ENCODE measurements at regions of chr16 and their contacts with region 1.

Region 1: DNA sequence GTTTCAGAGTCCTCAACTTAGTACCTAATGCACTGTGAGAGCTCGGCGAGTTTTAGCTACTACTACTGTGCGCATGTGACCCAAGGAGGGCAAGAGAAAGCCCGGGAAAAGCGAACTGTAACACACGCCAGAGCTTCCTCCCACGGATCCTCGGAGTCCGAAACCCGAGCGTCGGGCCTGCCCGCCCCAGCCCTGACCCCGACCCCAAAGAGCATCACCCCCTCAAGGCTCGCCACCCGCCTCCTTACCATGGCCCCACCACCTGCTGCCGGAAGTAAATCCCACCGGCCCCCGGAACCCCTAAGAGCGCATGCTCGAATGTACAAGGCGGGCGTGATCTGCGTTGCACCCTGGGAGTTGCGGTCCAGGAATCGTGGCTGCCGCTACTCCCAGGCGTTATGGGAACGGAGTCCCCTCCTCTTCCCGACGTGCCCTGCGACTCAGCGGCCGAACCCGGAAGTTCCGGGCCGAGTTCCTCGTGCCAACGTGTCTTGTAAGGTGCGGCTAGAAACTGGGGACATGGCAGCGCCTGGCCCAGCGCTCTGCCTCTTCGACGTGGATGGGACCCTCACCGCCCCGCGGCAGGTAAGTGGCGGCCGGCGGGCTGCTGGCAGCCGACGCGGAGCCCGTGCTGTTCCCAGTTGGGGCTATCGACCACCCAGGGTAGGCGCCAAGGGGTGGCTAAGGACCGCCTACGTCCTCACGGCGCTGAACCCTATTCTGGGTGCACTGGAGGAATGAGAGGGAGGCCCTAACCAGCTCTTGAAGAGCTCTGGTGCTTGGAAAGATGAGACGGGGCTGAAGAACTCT is at the starts of genes PMM2 and TMEM186:
- DNase-seq: peak; percentile 89
- H3K4me3 ChIP-seq: peak within 1 kb of the TSS; percentile 64 to 99 (median 80)
- H3K27ac ChIP-seq: peak within 1 kb of the TSS; percentile 76 to 93 (median 90)
- H3K4me1 ChIP-seq: peaks cover 19 to 46% (median 24%) of the 10 kb centered on the region in 3 donors
- H3K27me3 ChIP-seq: no peaks in the 10 kb centered on the region
- CTCF ChIP-seq: peak in 1 of 6 experiments; percentile 9
- POLR2A ChIP-seq: peak in 1 of 4 donors; percentile 50
- total RNA-seq, gene PMM2: 36.3 to 54.3 (median 41.4) TPM
- total RNA-seq, gene TMEM186: 3.6 to 9.7 (median 8.6) TPM

Region 2: DNA sequence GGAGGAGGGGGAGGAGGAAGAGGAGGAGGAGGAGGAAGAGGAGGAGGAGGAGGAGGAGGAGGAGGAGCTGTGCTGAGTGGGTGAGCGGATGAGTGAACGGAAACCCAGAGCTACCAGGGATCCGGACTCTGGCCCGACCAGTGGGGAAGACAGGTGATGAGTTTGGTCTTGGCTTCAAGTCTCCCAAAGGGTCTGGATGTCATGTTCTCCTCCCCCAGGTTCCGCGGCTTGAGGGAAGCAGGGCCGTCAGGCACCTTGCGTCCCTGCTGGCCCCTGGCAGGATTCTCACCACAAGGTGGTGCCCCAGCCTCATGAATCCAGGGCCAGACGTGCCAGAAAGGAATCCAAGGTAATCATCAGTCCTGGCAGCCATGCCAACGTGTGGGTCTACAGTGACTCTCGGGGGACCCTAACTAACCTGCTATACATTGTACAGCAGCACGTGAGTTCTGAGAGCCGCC is 136.7 kb before region 1 on chr16:
- intact Hi-C with region 1: loop called (anchors 2 kb)
- DNase-seq: no peak
- H3K4me3 ChIP-seq: no peak overlapping the region
- H3K27ac ChIP-seq: no peak overlapping the region
- H3K4me1 ChIP-seq: no peaks in the 10 kb centered on the region
- H3K27me3 ChIP-seq: no peaks in the 10 kb centered on the region
- CTCF ChIP-seq: peak; percentile 27 to 92 (median 70)
- POLR2A ChIP-seq: no peak

Region 3: DNA sequence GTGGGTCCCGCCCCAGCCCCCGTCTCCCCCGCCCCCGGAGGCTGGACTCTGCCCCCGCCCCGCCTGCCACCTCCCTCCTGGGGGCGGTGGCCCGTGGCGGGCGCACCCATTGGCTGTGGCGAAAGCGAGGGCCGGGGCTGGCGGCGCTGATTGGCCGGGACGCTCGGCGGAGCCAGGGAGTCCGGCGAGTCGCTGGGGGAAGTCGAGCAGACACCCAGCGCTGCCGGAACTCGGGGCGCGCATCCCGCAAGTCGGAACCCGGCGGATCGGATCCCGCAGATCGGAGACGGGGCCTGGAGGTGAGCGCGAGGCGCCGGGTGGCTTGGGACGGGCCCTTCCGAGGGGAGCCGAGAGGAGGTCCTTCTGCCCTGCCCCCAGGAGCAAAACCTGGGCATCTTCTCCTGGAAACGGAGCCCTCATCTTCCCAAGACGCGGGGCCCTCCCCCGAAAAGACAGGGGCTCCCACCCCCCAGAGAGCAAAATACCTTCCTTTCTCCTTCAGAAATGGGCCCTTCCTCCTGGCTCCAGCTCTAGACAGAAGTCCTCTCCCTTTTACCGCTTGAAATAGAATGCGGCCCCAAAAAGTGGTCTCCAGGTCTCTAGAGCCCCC is 123.1 kb before region 1 on chr16 and contains the start of gene ABAT:
- intact Hi-C with region 1: loop called (anchors 5 kb)
- DNase-seq: peak; percentile 45
- H3K4me3 ChIP-seq: peak within 1 kb of the TSS; percentile 57 to 69 (median 60)
- H3K27ac ChIP-seq: peak within 1 kb of the TSS; percentile 56 to 71 (median 63)
- H3K4me1 ChIP-seq: peaks cover 16 to 57% (median 21%) of the 10 kb centered on the region in 3 donors
- H3K27me3 ChIP-seq: no peaks in the 10 kb centered on the region
- CTCF ChIP-seq: no peak
- POLR2A ChIP-seq: peak in 3 of 4 donors; percentile 11 to 68 (median 41)
- total RNA-seq, gene ABAT: 2.9 to 14.5 (median 9.1) TPM

Region 4: DNA sequence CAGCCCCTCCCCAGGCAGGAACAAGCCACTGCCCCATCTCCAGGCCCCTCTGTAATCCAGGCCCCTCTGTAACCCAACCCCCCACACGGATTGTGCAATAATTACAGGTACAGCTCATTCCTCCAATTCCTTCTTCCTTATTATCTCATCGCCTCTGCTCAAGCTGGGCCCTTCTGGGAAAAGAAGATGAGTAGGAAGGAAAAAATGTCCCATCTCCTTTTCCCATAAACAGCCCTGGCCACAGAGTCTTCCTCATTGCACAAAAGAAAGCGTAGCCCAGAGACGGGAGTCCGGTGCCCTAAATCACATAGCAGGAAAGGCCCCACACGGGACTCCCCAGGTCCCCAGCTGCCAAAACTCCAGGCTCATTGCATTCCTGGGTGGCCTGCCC is 80.9 kb after region 1 on chr16:
- intact Hi-C with region 1: loop called (anchors 10 kb)
- DNase-seq: no peak
- H3K4me3 ChIP-seq: no peak overlapping the region
- H3K27ac ChIP-seq: peak overlapping the region; percentile 42 to 73 (median 65)
- H3K4me1 ChIP-seq: peaks cover 9 to 26% (median 13%) of the 10 kb centered on the region in 3 donors
- H3K27me3 ChIP-seq: peaks cover 0 to 10% (median 0%) of the 10 kb centered on the region in 4 donors
- CTCF ChIP-seq: no peak
- POLR2A ChIP-seq: no peak

Region 5: DNA sequence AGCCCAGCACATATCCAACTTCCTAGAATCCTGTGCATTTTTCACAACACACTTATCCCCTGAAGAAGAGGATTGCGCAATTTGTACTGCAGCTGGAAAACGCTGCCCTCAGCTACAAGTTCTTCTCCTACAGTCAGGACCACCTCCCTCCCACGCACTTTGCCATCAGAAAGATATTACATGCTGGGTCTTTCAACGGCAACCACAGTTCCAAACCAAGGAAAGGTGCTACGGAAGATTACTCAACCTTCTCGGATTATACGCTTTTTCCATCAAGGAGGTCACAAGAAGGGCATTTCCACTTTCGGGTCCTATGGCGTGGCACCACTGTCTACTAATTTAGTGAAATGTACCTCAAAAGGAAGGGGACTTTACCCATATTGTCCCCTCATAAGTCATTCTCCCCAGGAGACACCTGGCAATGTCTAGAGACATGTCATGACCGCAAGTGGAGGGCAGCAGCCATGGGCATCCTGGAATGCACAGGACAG is 130.9 kb after region 1 on chr16:
- intact Hi-C with region 1: no loop called
- DNase-seq: no peak
- H3K4me3 ChIP-seq: no peak overlapping the region
- H3K27ac ChIP-seq: no peak overlapping the region
- H3K4me1 ChIP-seq: peaks cover 0 to 45% (median 3%) of the 10 kb centered on the region in 3 donors
- H3K27me3 ChIP-seq: no peaks in the 10 kb centered on the region
- CTCF ChIP-seq: no peak
- POLR2A ChIP-seq: no peak

Region 6: GRCh38 chr16:10280262-10281170 is 1482.9 kb after region 1 on chr16:
- intact Hi-C with region 1: no loop called
- DNase-seq: no peak
- H3K4me3 ChIP-seq: no peak overlapping the region
- H3K27ac ChIP-seq: no peak overlapping the region
- H3K4me1 ChIP-seq: peaks cover 0 to 9% (median 4%) of the 10 kb centered on the region in 3 donors
- H3K27me3 ChIP-seq: no peaks in the 10 kb centered on the region
- CTCF ChIP-seq: no peak
- POLR2A ChIP-seq: no peak

Measured in esophagus squamous epithelium (tissue), 5 donors.